Sigmoid colon (tissue), 7 donors: ENCODE measurements at regions of chr3 and their contacts with region 1.

Region 1: GRCh38 chr3:22117751-22118346 is 366.8 kb upstream of the ZNF385D start:
- DNase-seq: no peak
- H3K4me3 ChIP-seq: no peak overlapping the region
- H3K27ac ChIP-seq: no peak overlapping the region
- H3K4me1 ChIP-seq: no peaks in the 10 kb centered on the region
- H3K27me3 ChIP-seq: no peaks in the 10 kb centered on the region
- CTCF ChIP-seq: peak; percentile 34 to 54 (median 36)
- EP300 ChIP-seq: no peak
- POLR2A ChIP-seq: no peak

Region 2: DNA sequence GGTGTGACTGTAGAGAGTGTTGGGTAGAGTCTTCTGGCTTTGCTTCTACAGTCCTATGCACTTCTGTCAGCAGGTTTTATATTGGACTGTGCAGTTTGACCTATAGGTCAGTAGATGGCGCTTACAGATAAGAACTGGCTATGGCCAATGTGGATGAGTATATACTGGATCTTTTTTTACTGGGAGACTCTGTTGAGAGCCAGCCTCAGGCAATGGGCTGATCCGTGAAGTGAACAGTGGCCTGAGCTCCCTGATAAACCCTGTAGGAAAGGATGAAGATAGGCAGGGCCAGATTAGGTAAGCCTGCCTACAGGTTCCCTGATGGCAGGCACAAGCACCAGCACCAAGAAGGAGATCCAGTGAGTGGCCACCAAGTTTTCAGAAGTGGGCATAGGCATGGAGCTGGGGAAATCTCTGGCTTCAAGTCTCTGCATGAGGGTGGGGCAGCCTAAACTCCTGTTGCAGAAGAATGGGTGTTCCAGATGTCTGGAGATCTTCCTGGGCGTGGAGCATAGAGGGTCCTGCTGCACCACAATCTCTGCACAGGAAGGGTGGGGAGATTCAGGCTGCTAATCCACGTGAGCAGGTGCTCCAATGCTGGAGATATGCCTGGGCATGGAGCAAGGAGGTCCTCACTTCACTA is 1605.9 kb before region 1 on chr3:
- intact Hi-C with region 1: loop called (anchors 10 kb)
- DNase-seq: no peak
- H3K4me3 ChIP-seq: no peak overlapping the region
- H3K27ac ChIP-seq: no peak overlapping the region
- H3K4me1 ChIP-seq: no peaks in the 10 kb centered on the region
- H3K27me3 ChIP-seq: no peaks in the 10 kb centered on the region
- CTCF ChIP-seq: peak in 3 of 4 experiments; percentile 36 to 54 (median 39)
- EP300 ChIP-seq: no peak
- POLR2A ChIP-seq: no peak

Region 3: DNA sequence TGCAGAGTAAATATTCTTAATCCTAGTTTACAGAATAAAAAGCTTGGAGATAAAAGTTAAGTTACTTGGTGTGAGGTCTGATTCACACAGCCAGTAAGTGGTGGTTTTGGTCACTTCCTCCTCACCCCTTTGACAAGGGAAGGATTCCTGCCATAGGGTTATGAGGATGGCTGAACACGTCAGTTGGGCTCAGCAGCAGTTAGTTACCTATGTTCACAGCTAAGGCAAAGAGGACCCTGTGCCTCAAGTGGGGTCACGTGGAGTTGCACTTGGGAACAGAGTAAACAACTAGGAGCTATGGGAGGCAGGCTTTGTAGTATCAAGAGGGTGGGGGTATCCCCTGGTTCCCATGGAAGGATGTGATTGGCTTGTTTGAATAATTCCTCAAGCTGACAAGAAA is 1317.5 kb after region 1 on chr3:
- intact Hi-C with region 1: no loop called
- DNase-seq: no peak
- H3K4me3 ChIP-seq: no peak overlapping the region
- H3K27ac ChIP-seq: no peak overlapping the region
- H3K4me1 ChIP-seq: peaks cover 0 to 19% (median 5%) of the 10 kb centered on the region in 4 donors
- H3K27me3 ChIP-seq: no peaks in the 10 kb centered on the region
- CTCF ChIP-seq: no peak
- EP300 ChIP-seq: no peak
- POLR2A ChIP-seq: no peak